ENCODE measurements at regions of chr15 and their contacts with region 1.

Region 1: DNA sequence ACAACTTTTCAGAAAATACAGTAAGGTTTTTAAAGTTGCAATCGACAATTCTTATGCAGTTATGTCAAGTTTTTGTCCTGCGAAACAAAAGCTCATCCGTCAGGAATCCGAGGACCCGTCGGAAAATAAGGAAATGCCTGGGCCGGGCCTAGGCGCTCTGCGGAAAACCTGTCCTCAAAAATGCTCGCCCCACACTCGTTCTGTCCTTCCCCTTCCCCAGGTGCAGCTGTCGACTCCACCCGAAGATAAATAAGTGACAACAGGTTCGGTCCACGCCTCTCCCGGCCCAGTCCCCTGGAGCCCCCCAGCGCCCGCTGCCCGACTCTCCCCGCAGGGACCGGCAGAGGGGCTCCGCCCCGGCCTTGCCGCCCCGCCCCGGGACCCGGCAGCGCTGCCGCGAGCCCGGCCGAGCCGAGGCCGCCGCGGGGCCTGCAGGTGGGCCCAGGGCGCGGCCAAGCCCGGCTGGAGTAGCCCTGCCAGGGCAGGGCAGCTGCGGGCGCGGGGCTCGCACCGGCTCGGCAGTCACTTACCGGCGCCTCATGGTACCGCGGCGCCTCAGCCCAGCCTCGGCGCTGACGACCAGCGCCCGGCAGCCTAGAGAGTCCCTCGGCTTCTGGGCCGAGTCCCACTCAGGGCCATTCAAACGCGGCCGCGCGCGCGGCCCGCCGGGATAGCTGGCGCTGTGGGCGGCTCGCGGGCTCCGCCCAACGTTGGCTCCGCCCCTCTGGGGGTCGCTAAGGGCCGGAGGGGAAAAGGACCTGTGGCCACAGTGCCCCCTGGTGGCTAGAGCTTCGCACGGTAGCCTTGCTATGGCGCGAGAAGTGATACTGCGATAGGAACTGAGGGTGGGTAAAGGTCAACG is at the start of gene KATNBL1:
- DNase-seq: peak; percentile 97
- CTCF ChIP-seq: peak; percentile 94

Region 2: GRCh38 chr15:34055853-34056595 is 153.6 kb before region 1 on chr15:
- CTCF ChIA-PET with region 1: interaction called, 19 read pairs
- POLR2A ChIA-PET with region 1: no interaction called
- DNase-seq: no peak
- CTCF ChIP-seq: no peak

Region 3: DNA sequence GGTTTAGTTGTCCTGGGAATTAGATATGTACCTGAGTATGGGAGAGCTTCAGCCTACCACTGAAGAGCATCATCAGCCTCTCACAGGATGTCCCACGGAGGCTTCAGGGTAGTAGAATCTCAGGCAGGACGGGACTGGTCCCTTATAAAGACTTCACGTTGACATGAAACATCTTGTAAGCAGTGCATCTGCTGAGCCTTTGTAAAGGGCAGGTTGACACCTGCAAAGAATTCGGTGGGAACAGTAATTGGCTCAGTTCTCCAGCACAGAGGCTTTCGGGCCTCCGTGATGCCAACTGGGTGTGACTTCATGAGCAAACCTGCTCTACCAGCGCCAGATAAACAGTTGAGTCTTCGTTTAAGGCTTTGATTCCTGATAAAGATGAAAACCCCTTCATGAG is 143.7 kb before region 1 on chr15:
- CTCF ChIA-PET with region 1: interaction called, 52 read pairs
- POLR2A ChIA-PET with region 1: interaction called, 3 read pairs
- DNase-seq: no peak
- CTCF ChIP-seq: no peak

Region 4: DNA sequence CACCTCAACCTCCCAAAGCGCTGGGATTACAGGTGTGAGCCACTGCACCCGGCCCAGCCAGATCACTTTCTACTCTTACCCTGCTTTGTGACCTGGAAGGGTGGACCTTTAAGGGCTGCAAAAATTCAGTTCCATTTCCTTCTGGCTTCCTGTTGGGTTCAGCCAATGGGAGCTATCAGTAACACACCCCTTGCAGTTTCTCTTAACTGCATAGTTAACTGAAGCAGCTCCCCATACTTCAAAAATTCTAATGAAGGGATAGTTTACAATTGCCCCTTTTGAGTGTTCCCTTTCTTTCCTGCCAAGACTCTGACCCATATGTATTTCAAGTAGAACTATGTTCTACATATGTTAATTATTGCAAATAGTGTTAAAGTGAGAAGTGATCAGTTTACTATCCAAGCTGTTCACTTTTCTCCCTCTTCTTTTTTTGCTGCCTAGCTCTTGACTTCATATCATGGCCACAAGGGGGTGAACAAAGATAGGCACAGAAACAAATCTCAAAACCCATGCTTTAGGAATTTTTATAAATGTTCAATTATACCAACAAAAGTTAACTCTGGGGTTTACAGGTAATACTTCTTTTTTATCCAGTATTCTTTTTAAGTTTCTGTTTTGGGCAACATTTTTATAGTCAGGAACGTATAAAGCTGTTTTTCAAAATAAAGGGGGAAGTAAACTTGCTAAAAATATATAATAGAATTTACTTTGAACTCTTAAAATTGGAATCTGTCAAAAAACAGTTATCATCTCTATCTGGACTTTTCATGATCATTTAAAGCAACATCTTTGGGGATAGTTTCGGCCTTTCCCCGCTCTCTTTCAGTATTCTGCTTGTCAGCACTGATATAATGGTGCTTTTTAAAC is 99.6 kb before region 1 on chr15:
- CTCF ChIA-PET with region 1: interaction called, 64 read pairs
- POLR2A ChIA-PET with region 1: interaction called, 5 read pairs
- DNase-seq: peak; percentile 31
- CTCF ChIP-seq: peak; percentile 66

Region 5: GRCh38 chr15:34161329-34161955 is 48.2 kb before region 1 on chr15:
- CTCF ChIA-PET with region 1: interaction called, 23 read pairs
- POLR2A ChIA-PET with region 1: no interaction called
- DNase-seq: no peak
- CTCF ChIP-seq: no peak

Region 6: GRCh38 chr15:34223904-34224596 is 14.4 kb after region 1 on chr15:
- CTCF ChIA-PET with region 1: interaction called, 26 read pairs
- POLR2A ChIA-PET with region 1: no interaction called
- DNase-seq: peak; percentile 31
- CTCF ChIP-seq: no peak

Region 7: DNA sequence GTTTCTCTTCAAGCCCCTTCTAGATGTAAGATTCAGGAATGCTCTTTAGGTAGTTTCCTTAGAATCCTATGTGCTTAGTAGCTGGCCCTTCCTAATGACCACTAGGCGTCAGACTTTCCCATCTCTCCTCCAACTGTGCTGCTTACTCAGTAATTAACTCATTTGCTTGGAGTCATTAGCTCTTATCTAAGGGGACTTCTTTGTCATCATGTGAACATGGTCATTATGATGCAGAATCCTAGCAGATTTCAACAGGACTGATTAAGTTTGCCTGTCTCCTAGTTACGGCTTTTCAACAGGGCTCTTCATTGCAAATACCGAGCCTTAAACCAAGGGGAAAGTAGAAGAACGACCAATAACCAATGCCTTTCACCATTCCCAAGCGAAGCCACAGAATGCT is 498.8 kb after region 1 on chr15:
- CTCF ChIA-PET with region 1: no interaction called
- POLR2A ChIA-PET with region 1: no interaction called
- DNase-seq: peak; percentile 24
- CTCF ChIP-seq: peak; percentile 65

Region 8: DNA sequence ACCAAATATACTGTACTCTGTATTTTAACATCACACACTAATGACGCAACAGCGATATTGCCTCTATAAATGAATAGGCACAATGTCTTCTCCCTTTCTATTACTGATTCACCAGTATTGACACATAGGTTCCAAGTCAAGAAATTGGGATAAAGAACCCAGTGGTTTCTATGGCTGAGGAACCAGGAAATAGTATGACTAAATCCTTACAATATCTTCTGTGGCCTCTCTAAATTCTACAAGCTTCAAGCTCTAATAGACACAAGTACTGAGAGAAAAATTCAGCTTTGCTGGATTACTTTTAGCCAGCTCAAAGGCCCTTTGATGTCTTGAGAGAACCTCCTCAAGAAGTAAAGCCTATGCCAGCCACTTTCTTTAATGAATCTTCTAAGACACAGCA is 1173.9 kb after region 1 on chr15:
- CTCF ChIA-PET with region 1: no interaction called
- POLR2A ChIA-PET with region 1: no interaction called
- DNase-seq: no peak
- CTCF ChIP-seq: no peak